ENCODE measurements at regions of chr12 and their contacts with region 1.

Region 1: GRCh38 chr12:27193854-27194544 is 50.1 kb upstream of the STK38L start:
- DNase-seq: peak; percentile 59 to 93
- H3K4me3 ChIP-seq: no peak overlapping the region
- H3K27ac ChIP-seq: peak overlapping the region; percentile 92 to 95
- H3K4me1 ChIP-seq: peaks cover 14 to 71% of the 10 kb centered on the region in 2 donors
- H3K27me3 ChIP-seq: no peaks in the 10 kb centered on the region
- CTCF ChIP-seq: peak in 2 of 3 experiments; percentile 5 to 31

Region 2: GRCh38 chr12:26701604-26702215 is 492.3 kb before region 1 on chr12:
- intact Hi-C with region 1: no loop called
- DNase-seq: no peak
- H3K4me3 ChIP-seq: no peak overlapping the region
- H3K27ac ChIP-seq: no peak overlapping the region
- H3K4me1 ChIP-seq: peaks cover 0 to 11% of the 10 kb centered on the region in 2 donors
- H3K27me3 ChIP-seq: no peaks in the 10 kb centered on the region
- CTCF ChIP-seq: peak; percentile 44 to 59 (median 45)

Region 3: GRCh38 chr12:27024291-27024690 is 169.7 kb before region 1 on chr12:
- intact Hi-C with region 1: loop called (anchors 5 kb)
- DNase-seq: no peak
- H3K4me3 ChIP-seq: peak overlapping the region in 1 of 2 donors; percentile 81
- H3K27ac ChIP-seq: no peak overlapping the region
- H3K4me1 ChIP-seq: peaks cover 10 to 16% of the 10 kb centered on the region in 2 donors
- H3K27me3 ChIP-seq: no peaks in the 10 kb centered on the region
- CTCF ChIP-seq: no peak

Region 4: DNA sequence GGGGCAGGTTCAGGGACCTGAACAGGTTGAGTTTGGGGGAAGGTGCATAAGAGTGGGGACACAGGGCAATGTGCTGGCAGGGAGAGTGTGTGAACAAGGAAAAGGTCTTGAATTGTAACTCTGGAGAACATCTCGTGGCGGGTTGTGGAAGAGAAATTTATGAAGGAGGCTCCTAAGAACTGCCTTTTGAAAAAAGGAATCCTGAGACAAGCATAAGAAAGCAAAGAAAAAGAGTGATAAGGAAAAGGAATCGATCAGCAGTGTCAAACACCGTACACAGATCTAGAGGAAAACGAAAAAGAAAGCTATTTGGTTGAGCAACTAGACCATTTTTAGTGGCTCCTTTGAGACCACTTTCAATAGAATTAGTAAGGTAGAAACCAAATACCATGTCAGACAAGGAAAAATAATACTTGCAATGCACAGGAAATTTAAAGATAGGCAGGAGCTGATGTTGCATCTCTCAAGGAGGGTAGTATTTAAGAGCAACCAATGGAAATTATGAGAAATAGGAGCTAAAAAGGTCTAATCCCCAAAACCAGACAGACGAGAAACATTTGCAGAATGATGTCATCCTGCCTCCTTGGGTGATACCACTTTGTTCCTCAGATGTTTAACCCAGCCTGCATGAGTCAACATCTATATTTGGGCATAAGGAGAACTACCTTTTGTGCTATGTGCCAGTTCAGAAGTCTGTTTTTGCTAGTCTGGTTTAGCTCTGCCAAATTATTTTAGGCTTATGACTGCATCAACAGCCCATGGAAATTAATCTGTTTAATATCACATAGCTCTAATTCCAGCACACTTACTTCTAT is 14.4 kb before region 1 on chr12:
- intact Hi-C with region 1: loop called (anchors 1 kb)
- DNase-seq: no peak
- H3K4me3 ChIP-seq: peak overlapping the region in 1 of 2 donors; percentile 31
- H3K27ac ChIP-seq: peak overlapping the region; percentile 92 to 95
- H3K4me1 ChIP-seq: peaks cover 19 to 34% of the 10 kb centered on the region in 2 donors
- H3K27me3 ChIP-seq: no peaks in the 10 kb centered on the region
- CTCF ChIP-seq: no peak

Region 5: GRCh38 chr12:27257104-27257843 is 63.3 kb after region 1 on chr12:
- intact Hi-C with region 1: loop called (anchors 5 kb)
- DNase-seq: no peak
- H3K4me3 ChIP-seq: peak overlapping the region in 1 of 2 donors; percentile 11
- H3K27ac ChIP-seq: peak overlapping the region; percentile 69 to 83
- H3K4me1 ChIP-seq: peaks cover 9 to 74% of the 10 kb centered on the region in 2 donors
- H3K27me3 ChIP-seq: no peaks in the 10 kb centered on the region
- CTCF ChIP-seq: no peak

Measured in ascending aorta (tissue), 2 donors.